Psoas muscle (tissue), 8 donors: ENCODE measurements at regions of chr16 and their contacts with region 1.

Region 1: GRCh38 chr16:46853713-46854443 is 22.9 kb upstream of the C16orf87 start:
- DNase-seq: peak; percentile 71 to 85
- ATAC-seq: peak; percentile 77 to 88 (median 78)
- H3K4me3 ChIP-seq: no peak overlapping the region
- H3K27ac ChIP-seq: no peak overlapping the region
- H3K4me1 ChIP-seq: peaks cover 12% of the 10 kb centered on the region
- H3K27me3 ChIP-seq: no peaks in the 10 kb centered on the region
- CTCF ChIP-seq: peak; percentile 86

Region 2: DNA sequence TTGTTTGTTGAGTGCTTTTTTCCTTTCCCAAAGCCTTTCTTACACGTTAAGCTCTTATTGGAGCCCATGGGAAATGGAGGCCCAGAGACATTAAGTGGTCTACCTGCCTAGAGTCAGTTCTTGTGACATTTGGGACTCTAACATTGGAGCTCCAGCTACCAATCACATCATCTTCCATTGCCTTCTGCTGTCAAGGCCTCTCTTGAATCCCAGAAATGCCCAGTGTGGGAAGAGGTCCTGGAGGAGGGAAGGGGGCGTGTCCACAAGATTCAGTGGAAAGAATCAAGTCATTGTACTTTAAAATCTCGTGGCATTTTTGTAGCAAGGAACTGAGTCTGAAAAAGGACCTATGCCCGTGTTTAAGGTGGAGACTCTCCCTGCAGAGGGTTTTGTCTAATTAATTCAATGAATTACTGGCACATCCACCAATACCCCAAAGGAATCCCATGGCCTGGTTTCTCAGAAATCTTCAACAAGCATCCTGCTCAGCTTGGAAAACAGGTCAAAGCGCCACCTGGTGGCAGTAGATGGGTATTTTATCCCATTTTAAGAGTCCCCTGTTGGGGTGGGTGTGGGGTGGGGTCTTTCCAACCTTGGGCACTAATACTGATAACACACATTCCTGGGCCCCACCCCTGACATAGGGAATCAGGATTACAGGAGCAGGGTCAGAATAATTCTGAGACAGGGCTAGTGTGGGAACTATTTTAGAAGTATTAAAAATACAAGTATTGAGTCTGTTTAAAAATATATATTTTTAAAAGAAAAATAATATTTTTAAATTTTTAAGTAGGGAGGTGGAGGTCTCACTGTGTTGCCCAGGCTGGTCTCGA is 54.9 kb after region 1 on chr16:
- intact Hi-C with region 1: loop called (anchors 1 to 2 kb)
- DNase-seq: no peak
- ATAC-seq: peak; percentile 50 to 83 (median 71)
- H3K4me3 ChIP-seq: no peak overlapping the region
- H3K27ac ChIP-seq: peak overlapping the region; percentile 30
- H3K4me1 ChIP-seq: peaks cover 7% of the 10 kb centered on the region
- H3K27me3 ChIP-seq: no peaks in the 10 kb centered on the region
- CTCF ChIP-seq: peak; percentile 83

Region 3: GRCh38 chr16:46929378-46930332 is 75.8 kb after region 1 on chr16:
- intact Hi-C with region 1: loop called (anchors 5 kb)
- DNase-seq: peak; percentile 71 to 88
- ATAC-seq: peak; percentile 78 to 88 (median 83)
- H3K4me3 ChIP-seq: no peak overlapping the region
- H3K27ac ChIP-seq: peak overlapping the region; percentile 36
- H3K4me1 ChIP-seq: peaks cover 18% of the 10 kb centered on the region
- H3K27me3 ChIP-seq: no peaks in the 10 kb centered on the region
- CTCF ChIP-seq: peak; percentile 88